Tibial artery (tissue), 4 donors: ENCODE measurements at regions of chr5 and their contacts with region 1.

Region 1: DNA sequence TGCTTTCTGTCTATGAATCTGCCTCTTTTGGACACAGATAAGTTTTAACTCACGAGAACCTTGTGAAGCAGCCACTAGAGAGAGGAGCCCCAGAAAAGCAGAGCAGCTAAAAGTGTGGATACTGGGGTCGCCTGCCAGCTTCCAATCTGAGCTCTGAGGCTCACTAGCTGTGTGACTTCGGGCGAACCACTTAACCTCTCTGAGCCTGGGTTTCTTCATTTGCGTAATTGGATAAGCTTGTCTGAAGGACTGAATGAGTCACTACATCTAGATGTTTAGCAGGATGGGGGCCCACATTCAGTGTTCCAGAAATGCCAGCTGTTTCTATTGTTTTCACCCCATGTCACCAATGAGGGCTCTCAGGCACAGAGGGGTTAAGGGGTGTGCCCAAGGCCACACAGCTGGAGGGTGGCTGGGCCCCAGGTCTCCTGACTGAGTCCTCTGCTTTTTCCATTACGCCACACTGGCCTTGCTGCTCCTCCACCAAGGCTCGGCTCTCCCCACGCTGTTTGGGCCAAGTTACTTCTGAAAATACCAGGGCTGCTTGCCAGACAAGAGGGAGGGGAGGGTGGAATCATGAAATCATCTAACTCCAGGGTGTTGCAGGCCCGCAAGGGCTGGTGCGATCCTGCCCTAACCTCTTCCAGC is 36.2 kb downstream of the SH3PXD2B start:
- DNase-seq: peak; percentile 97 to 98
- H3K4me3 ChIP-seq: no peak overlapping the region
- H3K27ac ChIP-seq: peak overlapping the region; percentile 82 to 90
- H3K4me1 ChIP-seq: peaks cover 0 to 76% (median 61%) of the 10 kb centered on the region in 4 donors
- H3K27me3 ChIP-seq: no peaks in the 10 kb centered on the region
- CTCF ChIP-seq: peak in 1 of 2 experiments; percentile 15

Region 2: GRCh38 chr5:172453206-172453985 is 35.3 kb after region 1 on chr5:
- intact Hi-C with region 1: loop called (anchors 2 kb)
- DNase-seq: peak in 1 of 2 donors; percentile 78
- H3K4me3 ChIP-seq: peak overlapping the region; percentile 96 to 97
- H3K27ac ChIP-seq: peak overlapping the region; percentile 86 to 90
- H3K4me1 ChIP-seq: peaks cover 0 to 47% (median 37%) of the 10 kb centered on the region in 4 donors
- H3K27me3 ChIP-seq: no peaks in the 10 kb centered on the region
- CTCF ChIP-seq: peak; percentile 50 to 51

Region 3: DNA sequence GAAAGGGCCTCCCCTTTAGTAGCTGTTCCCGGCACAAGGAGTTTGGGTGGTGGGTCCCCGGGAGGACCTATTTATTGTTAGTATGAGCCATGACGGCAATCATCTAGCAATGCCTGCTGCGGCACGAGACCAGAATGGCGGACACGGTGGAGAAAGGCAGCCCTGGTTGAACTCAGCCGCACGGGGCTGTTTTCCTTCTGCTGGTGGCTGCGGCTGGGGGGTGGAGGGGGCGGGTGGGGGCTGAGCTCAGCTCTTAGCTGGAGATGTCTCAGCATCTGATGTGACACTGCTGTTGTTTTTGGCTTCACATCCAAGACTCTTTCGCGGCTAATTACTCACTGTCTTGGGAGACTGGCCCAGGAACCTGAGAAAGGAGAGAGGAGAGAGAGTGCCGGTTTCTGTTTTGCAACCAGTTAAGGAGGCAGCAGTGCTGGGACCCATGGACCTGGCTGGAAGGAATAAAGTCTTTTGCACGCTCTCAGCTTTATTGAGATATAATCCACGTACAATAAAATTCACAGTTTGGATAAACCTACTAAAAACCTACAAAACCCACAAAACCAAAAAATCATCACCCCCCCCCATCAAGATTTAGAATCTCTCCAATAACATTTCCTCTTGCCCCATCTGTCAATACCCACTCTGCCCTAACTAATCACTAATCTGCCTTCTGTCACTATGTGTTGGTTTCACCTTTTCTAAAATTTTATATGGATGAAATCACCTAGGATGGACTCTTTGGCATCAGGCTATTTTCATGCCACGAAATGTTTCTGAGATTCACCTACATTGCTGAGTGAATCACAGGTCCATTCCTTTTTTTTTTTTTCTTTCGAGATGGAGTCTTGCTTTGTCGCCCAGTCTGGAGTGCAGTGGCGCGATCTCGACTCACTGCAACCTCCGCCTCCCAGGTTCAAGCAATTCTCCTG is 141.2 kb after region 1 on chr5:
- intact Hi-C with region 1: no loop called
- DNase-seq: peak in 1 of 2 donors; percentile 38
- H3K4me3 ChIP-seq: peak overlapping the region; percentile 43 to 48
- H3K27ac ChIP-seq: peak overlapping the region; percentile 26 to 51
- H3K4me1 ChIP-seq: peaks cover 0 to 12% (median 6%) of the 10 kb centered on the region in 4 donors
- H3K27me3 ChIP-seq: peaks cover 0 to under 1% of the 10 kb centered on the region in 2 donors
- CTCF ChIP-seq: no peak

Region 4: GRCh38 chr5:172748341-172748843 is 330.3 kb after region 1 on chr5:
- intact Hi-C with region 1: no loop called
- DNase-seq: peak; percentile 81 to 98
- H3K4me3 ChIP-seq: peak overlapping the region; percentile 5 to 6
- H3K27ac ChIP-seq: peak overlapping the region; percentile 90 to 92
- H3K4me1 ChIP-seq: peaks cover 0 to 80% (median 40%) of the 10 kb centered on the region in 4 donors
- H3K27me3 ChIP-seq: no peaks in the 10 kb centered on the region
- CTCF ChIP-seq: peak in 1 of 2 experiments; percentile 22